AG04450 (cell line): ENCODE measurements at regions of chr7 and their contacts with region 1.

Region 1: GRCh38 chr7:73585196-73585595 is 6.8 kb upstream of the TBL2 start:
- DNase-seq: no peak
- H3K4me3 ChIP-seq: no peak overlapping the region
- H3K27ac ChIP-seq: no peak overlapping the region
- H3K27me3 ChIP-seq: no peaks in the 10 kb centered on the region
- CTCF ChIP-seq: no peak

Region 2: DNA sequence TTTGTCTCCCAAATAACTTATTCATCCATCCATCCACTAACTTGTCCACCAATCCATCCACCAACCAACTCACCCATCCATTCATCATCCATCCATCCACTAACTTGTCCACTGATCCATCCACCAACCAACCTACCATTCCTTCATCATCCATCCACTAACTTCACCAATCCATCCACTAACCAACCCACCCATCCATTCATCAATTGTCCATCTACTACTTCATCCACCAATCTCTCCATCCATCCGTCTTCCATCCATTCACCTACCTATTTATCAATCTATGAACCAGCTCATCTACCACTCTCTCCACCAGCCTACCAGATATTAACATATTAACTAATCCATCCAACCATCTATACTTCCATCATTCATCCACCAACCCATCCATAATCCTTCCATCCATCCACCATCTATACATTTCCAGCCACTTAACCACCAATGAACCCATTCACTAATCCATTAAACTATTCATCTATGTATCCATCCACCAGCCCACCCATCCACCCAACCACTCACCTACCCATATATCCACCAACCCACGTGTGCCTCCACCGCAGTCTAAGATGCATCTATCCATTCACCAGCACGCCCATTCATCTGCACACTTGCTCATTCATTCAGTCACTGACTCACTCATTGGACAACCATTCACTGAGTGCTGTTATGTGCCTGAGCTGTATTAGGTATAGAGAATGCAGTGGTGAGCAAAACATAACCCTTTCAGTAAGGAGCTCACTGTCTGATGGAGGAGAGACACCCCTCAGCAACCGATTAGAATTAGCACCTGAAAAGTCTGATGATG is 13.0 kb after region 1 on chr7:
- CTCF ChIA-PET with region 1: no interaction called
- POLR2A ChIA-PET with region 1: interaction called, 12 read pairs
- DNase-seq: no peak
- H3K4me3 ChIP-seq: no peak overlapping the region
- H3K27ac ChIP-seq: no peak overlapping the region
- H3K27me3 ChIP-seq: peaks cover 26% of the 10 kb centered on the region
- CTCF ChIP-seq: no peak